GM12878 (cell line): ENCODE measurements at regions of chr1 and their contacts with region 1.

Region 1: DNA sequence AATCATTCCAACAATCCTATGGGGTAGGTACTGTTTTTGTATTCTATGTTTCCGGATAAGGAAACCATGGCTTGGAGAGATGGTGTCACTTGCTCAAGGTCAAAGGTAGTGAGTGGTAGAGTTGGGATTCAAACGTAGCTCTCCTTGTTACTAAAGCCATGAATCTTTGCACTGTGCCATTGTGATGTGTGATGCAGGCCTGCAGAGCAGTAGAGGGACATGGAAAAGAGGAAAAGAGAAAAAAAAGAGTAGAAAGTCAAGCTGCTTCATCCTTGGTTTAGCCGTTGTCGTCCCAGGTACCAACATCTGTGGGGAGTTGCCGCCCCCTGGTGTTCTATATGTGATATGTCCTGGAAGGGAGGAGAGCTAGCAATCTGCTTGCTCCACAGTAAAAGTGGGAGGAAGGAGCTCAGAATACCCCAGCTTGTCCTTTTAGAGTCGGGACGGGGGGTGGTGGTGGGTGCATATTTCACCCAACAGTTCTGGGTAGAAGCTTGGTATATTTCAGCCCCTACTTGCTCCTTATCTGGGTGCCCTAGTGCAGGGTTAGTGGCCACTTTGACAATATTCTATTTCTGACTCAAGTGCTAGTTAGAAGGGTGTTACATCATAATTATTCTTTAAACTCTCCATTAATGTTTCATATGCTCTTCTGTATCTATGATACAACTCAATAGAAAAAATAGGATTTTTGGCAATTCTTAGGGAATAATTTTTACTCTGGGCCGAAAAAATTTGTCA is 98.4 kb downstream of the EBNA1BP2 start:
- DNase-seq: peak; percentile 40
- ATAC-seq: peak; percentile 97
- H3K4me3 ChIP-seq: no peak overlapping the region
- H3K27ac ChIP-seq: no peak overlapping the region
- H3K4me1 ChIP-seq: peaks cover 9% of the 10 kb centered on the region; the same call in 1 of the 2 replicates
- H3K27me3 ChIP-seq: peaks cover 0 to 1% of the 10 kb centered on the region in 2 experiments; a peak in 1 of 4 replicates
- CTCF ChIP-seq: peak; percentile 74 to 90 (median 85)
- EP300 ChIP-seq: no peak
- POLR2A ChIP-seq: no peak
- RAD21 ChIP-seq: peak; percentile 99

Region 2: GRCh38 chr1:42586016-42586415 is 487.6 kb before region 1 on chr1:
- CTCF ChIA-PET with region 1: interaction called, 13 read pairs
- POLR2A ChIA-PET with region 1: no interaction called
- RAD21 ChIA-PET with region 1: interaction called, 5 read pairs
- SMC1A ChIA-PET with region 1: interaction called, 9 read pairs
- in situ Hi-C with region 1: no loop called
- intact Hi-C with region 1: loop called (anchors 5 kb)
- DNase-seq: no peak
- ATAC-seq: peak; percentile 83
- H3K4me3 ChIP-seq: no peak overlapping the region
- H3K27ac ChIP-seq: no peak overlapping the region
- H3K4me1 ChIP-seq: no peaks in the 10 kb centered on the region
- H3K27me3 ChIP-seq: no peaks in the 10 kb centered on the region
- CTCF ChIP-seq: no peak
- EP300 ChIP-seq: 0 out of 4 replicates have a peak, but pooled peaks of 1 of the 2 experiments have one; percentile 33
- POLR2A ChIP-seq: no peak
- RAD21 ChIP-seq: no peak

Region 3: DNA sequence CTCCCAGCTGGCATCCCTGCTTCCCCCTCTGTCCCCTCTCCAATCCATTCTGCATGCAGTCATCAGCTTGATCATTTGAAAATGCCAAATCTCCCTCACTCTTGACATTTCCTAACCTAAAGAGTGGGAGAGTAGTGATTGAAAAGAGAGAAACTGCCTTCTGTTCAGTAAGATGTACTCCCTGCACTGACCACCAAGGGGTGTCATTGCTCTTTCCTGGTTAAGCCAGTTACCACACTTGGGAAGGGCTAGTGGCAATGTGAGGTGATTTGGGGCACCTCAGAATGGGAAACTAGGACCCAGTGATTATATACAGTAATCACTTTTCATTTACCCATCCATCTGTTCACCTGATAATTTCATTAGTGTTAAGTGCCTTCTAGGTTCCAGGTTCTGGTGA is 295.8 kb before region 1 on chr1:
- CTCF ChIA-PET with region 1: interaction called, 60 read pairs
- POLR2A ChIA-PET with region 1: interaction called, 5 read pairs
- RAD21 ChIA-PET with region 1: interaction called, 92 read pairs
- SMC1A ChIA-PET with region 1: interaction called, 53 read pairs
- in situ Hi-C with region 1: loop called (anchors 5 kb)
- intact Hi-C with region 1: loop called (anchors 1 kb)
- DNase-seq: no peak
- ATAC-seq: peak; percentile 77
- H3K4me3 ChIP-seq: no peak overlapping the region
- H3K27ac ChIP-seq: no peak overlapping the region
- H3K4me1 ChIP-seq: peaks cover 5% of the 10 kb centered on the region; the same call in 1 of the 2 replicates
- H3K27me3 ChIP-seq: no peaks in the 10 kb centered on the region
- CTCF ChIP-seq: peak; percentile 69 to 76 (median 71)
- EP300 ChIP-seq: no peak
- POLR2A ChIP-seq: no peak
- RAD21 ChIP-seq: peak; percentile 85

Region 4: GRCh38 chr1:42913426-42914091 is 160.1 kb before region 1 on chr1:
- CTCF ChIA-PET with region 1: interaction called, 383 read pairs
- POLR2A ChIA-PET with region 1: interaction called, 4 read pairs
- RAD21 ChIA-PET with region 1: interaction called, 282 read pairs
- SMC1A ChIA-PET with region 1: interaction called, 602 read pairs
- in situ Hi-C with region 1: no loop called
- intact Hi-C with region 1: loop called (anchors 1 kb)
- DNase-seq: peak; percentile 64
- ATAC-seq: peak; percentile 88
- H3K4me3 ChIP-seq: no peak overlapping the region
- H3K27ac ChIP-seq: no peak overlapping the region
- H3K4me1 ChIP-seq: no peaks in the 10 kb centered on the region
- H3K27me3 ChIP-seq: no peaks in the 10 kb centered on the region
- CTCF ChIP-seq: peak; percentile 72 to 76 (median 74)
- EP300 ChIP-seq: no peak
- POLR2A ChIP-seq: no peak
- RAD21 ChIP-seq: peak; percentile 91

Region 5: GRCh38 chr1:42936309-42937078 is 137.2 kb before region 1 on chr1:
- CTCF ChIA-PET with region 1: interaction called, 24 read pairs
- POLR2A ChIA-PET with region 1: interaction called, 3 read pairs
- RAD21 ChIA-PET with region 1: interaction called, 9 read pairs
- SMC1A ChIA-PET with region 1: interaction called, 6 read pairs
- in situ Hi-C with region 1: no loop called
- intact Hi-C with region 1: no loop called
- DNase-seq: no peak
- ATAC-seq: no peak
- H3K4me3 ChIP-seq: no peak overlapping the region
- H3K27ac ChIP-seq: peak overlapping the region; percentile 38
- H3K4me1 ChIP-seq: peaks cover 92% of the 10 kb centered on the region
- H3K27me3 ChIP-seq: no peaks in the 10 kb centered on the region
- CTCF ChIP-seq: no peak
- EP300 ChIP-seq: no peak
- POLR2A ChIP-seq: no peak
- RAD21 ChIP-seq: no peak

Region 6: GRCh38 chr1:43059640-43060574 is 13.8 kb before region 1 on chr1:
- CTCF ChIA-PET with region 1: interaction called, 19 read pairs
- POLR2A ChIA-PET with region 1: no interaction called
- RAD21 ChIA-PET with region 1: interaction called, 7 read pairs
- SMC1A ChIA-PET with region 1: interaction called, 19 read pairs
- in situ Hi-C with region 1: no loop called
- intact Hi-C with region 1: no loop called
- DNase-seq: no peak
- ATAC-seq: no peak
- H3K4me3 ChIP-seq: no peak overlapping the region
- H3K27ac ChIP-seq: no peak overlapping the region
- H3K4me1 ChIP-seq: no peaks in the 10 kb centered on the region
- H3K27me3 ChIP-seq: no peaks in the 10 kb centered on the region
- CTCF ChIP-seq: no peak
- EP300 ChIP-seq: no peak
- POLR2A ChIP-seq: no peak
- RAD21 ChIP-seq: no peak